ENCODE measurements at regions of chr3 and their contacts with region 1.

Region 1: GRCh38 chr3:58568572-58569286 is 8.5 kb downstream of the FAM107A start:
- DNase-seq: peak; percentile 80
- ATAC-seq: peak; percentile 65
- H3K4me3 Mint-ChIP-seq: no peak overlapping the region
- H3K27ac Mint-ChIP-seq: no peak overlapping the region
- H3K4me1 Mint-ChIP-seq: peaks cover 6% of the 10 kb centered on the region
- H3K27me3 Mint-ChIP-seq: peaks cover 14% of the 10 kb centered on the region

Region 2: GRCh38 chr3:58553003-58553402 is 15.7 kb before region 1 on chr3:
- CTCF ChIA-PET with region 1: interaction called, 11 read pairs
- DNase-seq: no peak
- ATAC-seq: no peak
- H3K4me3 Mint-ChIP-seq: no peak overlapping the region
- H3K27ac Mint-ChIP-seq: no peak overlapping the region
- H3K4me1 Mint-ChIP-seq: no peaks in the 10 kb centered on the region
- H3K27me3 Mint-ChIP-seq: peaks cover 21% of the 10 kb centered on the region

Region 3: GRCh38 chr3:58630076-58630709 is 61.5 kb after region 1 on chr3:
- CTCF ChIA-PET with region 1: interaction called, 163 read pairs
- DNase-seq: peak; percentile 71
- ATAC-seq: peak; percentile 45
- H3K4me3 Mint-ChIP-seq: no peak overlapping the region
- H3K27ac Mint-ChIP-seq: no peak overlapping the region
- H3K4me1 Mint-ChIP-seq: peaks cover 4% of the 10 kb centered on the region
- H3K27me3 Mint-ChIP-seq: peaks cover 3% of the 10 kb centered on the region

Measured in activated CD8-positive, alpha-beta memory T cell treated with anti-CD3 and anti-CD28 coated beads, Interleukin-2, amount 10 ng/mL, durations not matched to agents 7 days and 5 days (primary cell).